Heart left ventricle (tissue), 16 donors: ENCODE measurements at regions of chr14 and their contacts with region 1.

Region 1: DNA sequence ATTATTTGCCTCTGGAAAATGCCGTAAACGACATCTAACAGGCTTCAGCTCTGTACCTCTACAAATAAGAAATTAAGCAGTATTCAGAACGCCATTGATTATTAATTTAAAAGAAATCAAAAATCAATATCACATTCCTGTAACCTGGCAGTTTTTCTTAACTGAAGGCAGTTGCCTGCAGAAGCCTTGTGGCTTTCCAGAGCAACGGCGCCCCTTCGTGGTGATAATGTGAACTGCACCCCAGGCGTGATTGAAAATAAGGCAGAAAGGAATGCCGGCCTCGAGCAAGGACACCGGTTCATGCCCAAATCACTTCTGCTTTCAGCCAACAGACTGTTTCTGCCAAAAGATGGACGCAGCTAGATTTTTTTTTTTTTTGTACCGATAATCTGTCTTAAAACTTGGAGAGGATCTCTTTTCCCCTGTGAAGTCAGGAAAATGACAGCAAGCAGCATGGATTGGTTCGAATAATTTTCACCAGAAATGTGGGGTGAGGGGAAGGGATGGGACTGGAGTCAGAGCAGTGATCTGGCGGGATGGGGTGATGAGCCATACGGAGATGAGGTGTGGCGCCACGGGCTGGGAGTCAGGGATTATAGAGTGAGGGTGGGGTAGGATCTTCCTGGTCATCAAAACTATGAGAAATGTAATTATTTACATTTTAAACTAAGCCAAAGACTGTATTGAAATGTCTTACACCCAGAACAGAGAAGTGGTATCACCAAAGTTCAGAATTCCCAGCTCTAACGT is 473.0 kb downstream of the DPF3 start:
- DNase-seq: peak; percentile 49 to 78 (median 63)
- ATAC-seq: peak in 3 of 4 donors; percentile 35 to 52 (median 47)
- H3K4me3 ChIP-seq: no peak overlapping the region
- H3K27ac ChIP-seq: no peak overlapping the region
- H3K4me1 ChIP-seq: peaks cover 0 to 3% (median 0%) of the 10 kb centered on the region in 12 donors
- H3K27me3 ChIP-seq: no peaks in the 10 kb centered on the region
- CTCF ChIP-seq: peak; percentile 82 to 98 (median 91)
- POLR2A ChIP-seq: no peak

Region 2: DNA sequence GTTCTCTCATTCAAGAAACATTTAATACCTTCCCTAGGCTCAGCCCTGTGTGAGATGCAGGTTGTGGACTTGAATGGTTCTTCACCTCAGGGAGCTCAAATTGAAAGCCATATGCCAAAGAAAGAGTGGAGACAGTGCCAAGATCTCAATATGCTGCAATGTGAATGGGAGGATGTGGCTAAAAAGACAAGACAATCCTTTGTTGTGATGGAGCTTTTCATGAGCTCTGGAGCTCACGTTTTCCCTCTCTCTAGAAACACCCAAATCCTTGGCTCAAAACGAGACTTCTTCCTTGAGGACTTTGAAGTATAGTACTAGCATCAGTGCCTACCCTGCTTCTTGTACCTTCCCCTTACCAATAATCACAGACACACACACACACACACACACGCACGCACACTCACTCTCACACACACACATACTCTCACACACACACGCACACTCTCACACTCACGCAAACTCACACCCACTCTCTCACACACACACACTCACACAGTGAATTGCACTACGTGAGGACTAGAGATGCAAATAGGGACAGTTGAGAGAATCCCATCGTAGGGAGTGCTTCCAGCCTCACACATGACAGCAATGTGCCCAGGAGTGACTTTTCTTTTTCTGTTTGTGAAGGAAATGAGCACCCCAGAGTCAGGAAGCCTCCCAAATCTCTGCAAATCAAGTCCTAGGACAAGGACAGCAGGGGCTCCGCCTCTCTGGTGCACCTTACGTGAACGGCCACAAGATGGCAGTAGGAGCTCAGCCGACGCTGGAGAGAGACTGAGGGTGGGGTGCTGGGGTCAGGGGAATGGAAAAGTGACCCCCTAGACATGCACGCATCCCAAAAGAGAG is 1282.2 kb before region 1 on chr14:
- intact Hi-C with region 1: loop called in 1 of 10 experiments (anchors 10 kb)
- DNase-seq: peak; percentile 36 to 77 (median 47)
- ATAC-seq: peak; percentile 55 to 85 (median 72)
- H3K4me3 ChIP-seq: peak overlapping the region in 2 of 12 donors; percentile 7 to 28
- H3K27ac ChIP-seq: no peak overlapping the region
- H3K4me1 ChIP-seq: peaks cover 0 to 31% (median 0%) of the 10 kb centered on the region in 12 donors
- H3K27me3 ChIP-seq: no peaks in the 10 kb centered on the region
- CTCF ChIP-seq: peak; percentile 88 to 95 (median 92)
- POLR2A ChIP-seq: no peak

Region 3: DNA sequence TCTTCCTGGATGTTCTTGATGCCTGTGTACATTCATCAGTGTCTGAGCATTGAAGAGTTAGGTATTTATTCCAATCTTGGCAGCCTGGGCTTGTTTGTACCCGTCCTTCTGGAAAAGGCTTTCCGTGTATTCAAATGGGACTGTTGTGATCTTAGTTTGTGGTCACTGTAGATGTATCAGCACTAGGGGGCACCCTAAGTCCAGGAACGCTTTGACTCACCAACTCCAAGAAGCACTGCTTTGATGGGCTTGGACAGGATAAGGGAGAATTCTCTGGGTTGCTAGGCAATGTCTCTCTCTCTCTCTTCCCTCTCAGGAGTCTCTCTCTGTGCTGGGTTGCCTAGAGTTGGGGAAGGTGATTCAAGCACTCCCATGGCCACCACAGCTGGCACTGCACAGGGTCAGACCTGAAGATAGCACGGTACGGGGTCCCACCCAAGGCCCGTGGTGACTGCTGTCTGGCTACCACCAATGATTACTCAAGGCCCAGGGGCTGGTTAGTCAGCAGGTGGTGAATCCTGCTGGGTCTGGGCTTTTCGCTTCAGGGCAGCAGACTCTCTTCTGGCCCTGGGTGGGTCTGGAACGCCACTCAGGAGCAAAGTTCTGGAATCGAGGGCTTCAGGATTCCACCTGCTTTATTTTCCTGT is 699.8 kb before region 1 on chr14:
- intact Hi-C with region 1: loop called in 1 of 10 experiments (anchors 10 kb)
- DNase-seq: peak in 3 of 5 donors; percentile 33 to 42 (median 41)
- ATAC-seq: peak; percentile 67 to 91 (median 82)
- H3K4me3 ChIP-seq: no peak overlapping the region
- H3K27ac ChIP-seq: no peak overlapping the region
- H3K4me1 ChIP-seq: no peaks in the 10 kb centered on the region
- H3K27me3 ChIP-seq: no peaks in the 10 kb centered on the region
- CTCF ChIP-seq: peak; percentile 37 to 68 (median 57)
- POLR2A ChIP-seq: no peak

Region 4: DNA sequence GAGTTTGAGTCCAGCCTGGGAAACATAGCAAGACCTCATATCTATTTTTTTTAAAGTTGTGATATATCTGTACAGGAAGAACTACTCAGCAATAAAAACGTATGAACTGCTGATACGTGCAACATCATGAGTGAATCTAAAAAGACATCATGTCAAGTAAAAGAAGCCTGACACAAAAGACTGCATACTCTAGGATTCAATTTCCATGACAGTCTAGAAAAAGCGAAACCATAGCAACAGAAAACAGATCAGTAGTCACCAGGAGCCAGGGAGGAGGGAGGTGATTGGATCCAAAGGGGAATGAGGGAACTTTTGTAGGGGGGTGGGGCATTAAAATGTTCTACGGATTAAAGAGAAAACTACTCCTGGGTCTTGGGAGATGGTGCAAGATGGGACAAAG is 497.4 kb before region 1 on chr14:
- intact Hi-C with region 1: loop called in 1 of 10 experiments (anchors 10 kb)
- DNase-seq: no peak
- ATAC-seq: no peak
- H3K4me3 ChIP-seq: no peak overlapping the region
- H3K27ac ChIP-seq: no peak overlapping the region
- H3K4me1 ChIP-seq: no peaks in the 10 kb centered on the region
- H3K27me3 ChIP-seq: no peaks in the 10 kb centered on the region
- CTCF ChIP-seq: no peak
- POLR2A ChIP-seq: no peak

Region 5: DNA sequence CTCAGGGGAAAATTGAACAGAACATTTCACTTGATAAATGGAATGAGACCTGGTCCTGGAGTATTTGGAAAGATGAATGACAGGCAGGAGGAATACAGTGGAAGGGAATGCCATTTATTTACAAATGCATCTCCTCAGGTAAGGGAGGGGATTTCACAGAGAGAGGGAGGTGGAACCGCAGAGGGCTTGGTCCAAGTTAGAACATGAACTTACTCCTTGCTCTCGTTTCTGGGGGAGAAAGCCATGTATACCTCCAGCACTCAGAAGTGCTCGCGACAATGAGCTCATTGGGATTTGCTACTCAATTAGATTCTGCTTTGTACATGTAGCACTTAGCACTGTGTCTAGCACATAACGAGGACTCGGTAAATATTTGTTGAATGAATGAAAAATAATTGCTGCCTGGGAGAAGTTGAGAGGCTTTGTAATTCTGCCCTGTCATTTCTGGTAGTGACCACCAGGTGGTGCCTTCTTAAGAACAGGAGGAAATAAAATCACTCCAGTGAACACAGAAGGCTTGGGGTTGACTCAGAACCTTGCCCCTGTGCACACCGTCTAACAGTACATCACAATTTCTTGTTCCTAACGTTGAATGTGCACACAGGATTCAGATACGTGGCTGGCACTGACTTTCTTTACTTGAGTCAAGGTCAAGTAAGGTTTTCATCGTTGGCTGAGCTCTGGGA is 397.0 kb before region 1 on chr14:
- intact Hi-C with region 1: loop called in 2 of 10 experiments (anchors 5 kb)
- DNase-seq: peak in 2 of 5 donors; percentile 19 to 20
- ATAC-seq: peak in 3 of 4 donors; percentile 58 to 63 (median 61)
- H3K4me3 ChIP-seq: no peak overlapping the region
- H3K27ac ChIP-seq: peak overlapping the region in 1 of 12 donors; percentile 37
- H3K4me1 ChIP-seq: peaks cover 0 to 24% (median 13%) of the 10 kb centered on the region in 12 donors
- H3K27me3 ChIP-seq: no peaks in the 10 kb centered on the region
- CTCF ChIP-seq: peak; percentile 45 to 72 (median 62)
- POLR2A ChIP-seq: no peak